ENCODE measurements at regions of chr1 and their contacts with region 1.

Region 1: DNA sequence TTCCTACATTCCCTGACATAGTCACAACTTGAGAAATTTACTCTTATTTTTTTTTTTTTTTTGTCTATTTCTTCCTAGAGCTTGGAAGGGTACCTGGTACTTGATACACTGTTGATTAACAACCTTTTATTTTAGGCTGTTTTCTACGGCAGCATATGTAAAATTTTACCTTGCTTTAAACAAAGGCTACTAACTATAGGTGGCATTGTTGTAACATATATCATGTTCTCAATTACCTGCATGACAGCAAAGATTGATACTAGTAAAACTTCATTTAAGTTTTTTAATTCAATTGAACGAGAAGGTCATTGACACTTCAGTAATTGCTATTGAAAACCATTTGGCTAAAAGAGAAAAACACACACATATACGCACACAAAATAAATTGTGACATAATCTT is 238.3 kb upstream of the ESRRG start:
- DNase-seq: peak; percentile 47
- ATAC-seq: peak; percentile 67
- H3K4me3 ChIP-seq: no peak overlapping the region
- H3K27ac ChIP-seq: no peak overlapping the region
- H3K4me1 ChIP-seq: no peaks in the 10 kb centered on the region
- H3K27me3 ChIP-seq: no peaks in the 10 kb centered on the region
- CTCF ChIP-seq: peak; percentile 76

Region 2: GRCh38 chr1:216997069-216997468 is 35.6 kb after region 1 on chr1:
- CTCF ChIA-PET with region 1: no interaction called
- POLR2A ChIA-PET with region 1: no interaction called
- intact Hi-C with region 1: no loop called
- DNase-seq: no peak
- ATAC-seq: no peak
- H3K4me3 ChIP-seq: no peak overlapping the region
- H3K27ac ChIP-seq: no peak overlapping the region
- H3K4me1 ChIP-seq: no peaks in the 10 kb centered on the region
- H3K27me3 ChIP-seq: no peaks in the 10 kb centered on the region
- CTCF ChIP-seq: no peak

Region 3: GRCh38 chr1:217009376-217009775 is 47.9 kb after region 1 on chr1:
- CTCF ChIA-PET with region 1: no interaction called
- POLR2A ChIA-PET with region 1: no interaction called
- intact Hi-C with region 1: no loop called
- DNase-seq: peak; percentile 47
- ATAC-seq: peak; percentile 76
- H3K4me3 ChIP-seq: no peak overlapping the region
- H3K27ac ChIP-seq: no peak overlapping the region
- H3K4me1 ChIP-seq: peaks cover 39% of the 10 kb centered on the region
- H3K27me3 ChIP-seq: no peaks in the 10 kb centered on the region
- CTCF ChIP-seq: no peak

Region 4: DNA sequence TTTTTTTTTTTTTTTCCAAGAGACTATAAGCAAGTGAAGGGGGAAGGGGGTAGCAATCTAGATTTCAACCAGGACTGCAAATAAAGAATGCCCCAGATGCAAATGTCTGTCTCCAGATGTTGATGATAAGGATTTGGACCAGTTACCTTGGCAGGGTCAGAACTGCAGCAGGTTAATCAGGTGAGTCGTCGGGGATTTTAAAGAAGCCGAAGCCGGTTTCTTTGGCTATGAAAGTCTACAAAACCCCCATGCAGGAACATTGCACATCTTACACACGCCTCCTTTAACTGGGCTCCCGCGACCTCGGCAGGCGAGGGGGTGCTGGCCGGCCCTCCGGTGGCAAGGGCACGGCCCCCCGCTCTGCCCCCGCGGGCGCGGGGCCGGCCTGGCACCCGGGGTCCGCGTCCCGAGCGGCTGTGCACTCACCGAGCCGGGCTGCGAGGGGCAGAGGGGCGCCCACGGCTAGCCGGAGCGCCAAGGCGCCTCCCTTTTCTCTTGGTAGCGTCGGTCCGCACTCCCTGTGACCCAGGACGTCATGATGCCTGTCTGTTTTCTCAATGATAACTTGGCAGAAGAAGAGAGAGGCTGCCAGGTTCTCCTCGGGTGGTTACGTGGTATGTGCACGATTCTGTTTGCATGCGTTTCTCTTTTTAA is 128.0 kb after region 1 on chr1:
- CTCF ChIA-PET with region 1: no interaction called
- POLR2A ChIA-PET with region 1: no interaction called
- intact Hi-C with region 1: loop called (anchors 5 kb)
- DNase-seq: peak; percentile 82
- ATAC-seq: peak; percentile 90
- H3K4me3 ChIP-seq: peak overlapping the region; percentile 84
- H3K27ac ChIP-seq: peak overlapping the region; percentile 54
- H3K4me1 ChIP-seq: peaks cover 17% of the 10 kb centered on the region
- H3K27me3 ChIP-seq: no peaks in the 10 kb centered on the region
- CTCF ChIP-seq: no peak

Region 5: DNA sequence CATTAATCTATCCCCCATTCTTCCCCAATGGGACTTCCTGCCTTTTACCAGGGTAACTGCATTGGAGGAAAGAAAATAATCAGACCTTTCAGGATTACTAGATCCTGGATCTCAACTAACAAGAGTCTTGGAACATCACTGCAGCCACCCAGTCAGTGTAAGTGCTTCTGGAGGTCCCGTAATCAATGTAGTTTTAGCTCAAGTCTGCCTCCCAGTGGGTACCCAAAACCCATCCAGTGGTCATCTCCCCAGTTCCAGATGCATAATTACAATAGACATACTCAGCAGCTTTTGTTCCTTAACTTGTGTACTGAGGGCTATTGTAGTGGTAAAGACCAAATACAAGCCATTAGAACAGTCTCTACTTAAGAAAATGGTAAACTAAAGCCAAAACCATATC is 350.2 kb after region 1 on chr1:
- CTCF ChIA-PET with region 1: no interaction called
- POLR2A ChIA-PET with region 1: no interaction called
- intact Hi-C with region 1: loop called (anchors 1 kb)
- DNase-seq: peak; percentile 70
- ATAC-seq: peak; percentile 40; the same call in 1 of the 2 replicates
- H3K4me3 ChIP-seq: no peak overlapping the region
- H3K27ac ChIP-seq: no peak overlapping the region
- H3K4me1 ChIP-seq: peaks cover 9% of the 10 kb centered on the region
- H3K27me3 ChIP-seq: no peaks in the 10 kb centered on the region
- CTCF ChIP-seq: peak; percentile 75

Region 6: DNA sequence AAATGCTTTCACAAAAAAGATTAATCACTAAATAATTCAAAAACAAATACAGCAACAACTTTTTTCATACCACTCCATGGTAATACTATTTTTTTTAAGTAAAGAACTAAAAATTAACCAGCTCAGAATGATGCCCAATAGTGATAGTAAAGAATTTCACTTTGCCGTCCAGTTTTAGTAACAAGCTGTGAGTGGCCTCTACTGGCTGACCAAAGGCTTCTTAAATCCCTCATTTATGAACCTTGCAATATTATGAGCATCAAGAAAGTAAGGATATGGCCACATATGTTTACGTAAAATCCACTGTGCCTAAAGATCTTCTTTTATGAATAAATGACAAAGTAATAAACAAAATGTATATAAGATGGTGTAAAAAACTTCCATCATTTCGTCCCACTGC is 560.8 kb after region 1 on chr1:
- CTCF ChIA-PET with region 1: no interaction called
- POLR2A ChIA-PET with region 1: no interaction called
- intact Hi-C with region 1: loop called (anchors 2 kb)
- DNase-seq: peak; percentile 32
- ATAC-seq: peak; percentile 37; the same call in 1 of the 2 replicates
- H3K4me3 ChIP-seq: no peak overlapping the region
- H3K27ac ChIP-seq: no peak overlapping the region
- H3K4me1 ChIP-seq: peaks cover 35% of the 10 kb centered on the region
- H3K27me3 ChIP-seq: no peaks in the 10 kb centered on the region
- CTCF ChIP-seq: peak; percentile 64

Region 7: GRCh38 chr1:217747156-217747769 is 785.7 kb after region 1 on chr1:
- CTCF ChIA-PET with region 1: no interaction called
- POLR2A ChIA-PET with region 1: no interaction called
- intact Hi-C with region 1: loop called (anchors 10 kb)
- DNase-seq: peak; percentile 75
- ATAC-seq: no peak; the same call in 1 of the 2 replicates
- H3K4me3 ChIP-seq: no peak overlapping the region
- H3K27ac ChIP-seq: no peak overlapping the region
- H3K4me1 ChIP-seq: no peaks in the 10 kb centered on the region
- H3K27me3 ChIP-seq: no peaks in the 10 kb centered on the region
- CTCF ChIP-seq: peak; percentile 89